A673 (cell line): ENCODE measurements at regions of chr6 and their contacts with region 1.

Region 1: DNA sequence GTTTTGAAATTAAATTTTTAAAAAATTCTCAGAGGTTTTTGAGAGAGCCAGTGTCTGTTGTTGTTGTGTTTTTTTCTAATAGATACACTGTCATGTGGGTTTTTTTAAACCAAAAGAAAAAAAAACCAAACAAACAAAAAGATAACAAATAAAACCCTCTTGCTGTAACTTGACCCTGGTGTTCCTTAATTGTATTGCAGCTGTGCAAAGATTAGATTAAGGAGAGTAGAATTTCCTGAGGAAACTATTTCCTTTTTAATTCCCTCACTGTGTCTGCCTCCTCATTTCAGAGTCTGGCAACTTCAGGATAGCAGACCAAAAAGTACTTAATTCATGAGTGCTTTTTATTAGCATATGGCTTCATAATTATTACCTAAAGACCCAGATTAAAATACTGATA is 281.9 kb downstream of the EPM2A start:
- DNase-seq: peak; percentile 92
- H3K4me3 ChIP-seq: no peak overlapping the region
- H3K27ac ChIP-seq: peak overlapping the region; percentile 86
- H3K4me1 ChIP-seq: peaks cover 23% of the 10 kb centered on the region
- H3K27me3 ChIP-seq: no peaks in the 10 kb centered on the region
- CTCF ChIP-seq: peak; percentile 52

Region 2: DNA sequence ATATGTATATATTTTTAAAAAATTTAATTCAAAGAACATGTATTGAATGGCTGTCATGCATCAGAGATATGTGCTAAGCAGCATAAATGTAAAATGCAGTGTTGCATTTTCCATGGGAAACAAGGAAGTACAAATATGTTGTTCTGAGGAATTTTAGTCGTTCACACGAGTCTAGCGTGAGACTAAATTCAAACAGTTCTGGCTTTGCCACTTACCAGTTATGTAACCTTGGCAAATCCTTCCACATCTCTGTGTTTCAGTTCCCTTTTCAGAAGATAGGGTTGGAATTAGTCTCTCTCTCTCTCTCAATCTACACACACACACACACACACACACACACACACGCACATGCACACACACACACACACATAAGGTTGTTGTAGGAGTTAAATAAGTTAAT is 862.8 kb before region 1 on chr6:
- CTCF ChIA-PET with region 1: no interaction called
- POLR2A ChIA-PET with region 1: no interaction called
- intact Hi-C with region 1: loop called (anchors 5 kb)
- DNase-seq: no peak
- H3K4me3 ChIP-seq: no peak overlapping the region
- H3K27ac ChIP-seq: no peak overlapping the region
- H3K4me1 ChIP-seq: peaks cover 48% of the 10 kb centered on the region
- H3K27me3 ChIP-seq: no peaks in the 10 kb centered on the region
- CTCF ChIP-seq: no peak

Region 3: GRCh38 chr6:145267076-145267867 is 186.1 kb before region 1 on chr6:
- CTCF ChIA-PET with region 1: no interaction called
- POLR2A ChIA-PET with region 1: no interaction called
- intact Hi-C with region 1: loop called (anchors 5 kb)
- DNase-seq: no peak
- H3K4me3 ChIP-seq: no peak overlapping the region
- H3K27ac ChIP-seq: no peak overlapping the region
- H3K4me1 ChIP-seq: peaks cover 18% of the 10 kb centered on the region
- H3K27me3 ChIP-seq: no peaks in the 10 kb centered on the region
- CTCF ChIP-seq: no peak

Region 4: GRCh38 chr6:145715426-145715825 is 262.1 kb after region 1 on chr6:
- CTCF ChIA-PET with region 1: no interaction called
- POLR2A ChIA-PET with region 1: no interaction called
- intact Hi-C with region 1: no loop called
- DNase-seq: no peak
- H3K4me3 ChIP-seq: no peak overlapping the region
- H3K27ac ChIP-seq: no peak overlapping the region
- H3K4me1 ChIP-seq: no peaks in the 10 kb centered on the region
- H3K27me3 ChIP-seq: no peaks in the 10 kb centered on the region
- CTCF ChIP-seq: no peak

Region 5: DNA sequence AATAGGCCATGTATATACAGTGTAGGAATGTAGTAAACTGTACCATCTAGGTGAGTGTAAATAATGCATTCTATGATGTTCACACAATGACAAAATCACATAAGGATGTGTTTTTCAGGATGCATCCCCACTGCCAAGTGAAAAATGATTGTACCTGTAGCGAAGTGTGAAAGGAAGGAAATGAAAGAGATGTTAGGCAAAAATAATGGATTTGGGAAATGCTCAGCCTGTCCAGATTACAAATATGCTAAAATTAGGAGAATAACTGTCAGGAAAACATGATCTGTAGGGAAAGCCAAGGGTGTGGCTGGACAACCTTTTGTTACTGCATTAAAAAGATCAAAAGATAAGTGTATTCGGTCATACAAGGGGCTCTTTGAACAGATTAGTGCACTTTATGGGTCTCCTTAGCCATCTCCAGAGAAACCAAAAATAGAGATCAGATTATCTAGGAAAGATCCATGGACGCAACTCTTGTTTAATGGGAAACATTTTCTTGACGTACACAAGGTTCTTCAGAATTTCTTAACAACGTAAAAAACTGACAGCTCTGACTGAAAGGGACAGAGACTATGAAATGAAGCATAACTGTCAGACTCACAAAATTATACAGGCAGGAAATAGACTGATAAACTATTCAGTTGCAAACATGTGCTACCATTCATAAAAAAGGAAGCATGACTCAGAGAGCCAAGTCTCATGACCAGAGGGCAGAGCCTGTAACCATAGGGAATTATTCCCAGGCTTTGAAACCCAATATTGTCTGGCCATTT is 836.6 kb after region 1 on chr6:
- CTCF ChIA-PET with region 1: no interaction called
- POLR2A ChIA-PET with region 1: no interaction called
- intact Hi-C with region 1: no loop called
- DNase-seq: peak; percentile 89
- H3K4me3 ChIP-seq: no peak overlapping the region
- H3K27ac ChIP-seq: no peak overlapping the region
- H3K4me1 ChIP-seq: peaks cover 9% of the 10 kb centered on the region
- H3K27me3 ChIP-seq: no peaks in the 10 kb centered on the region
- CTCF ChIP-seq: no peak

Region 6: GRCh38 chr6:146305092-146305491 is 851.7 kb after region 1 on chr6:
- CTCF ChIA-PET with region 1: no interaction called
- POLR2A ChIA-PET with region 1: no interaction called
- intact Hi-C with region 1: no loop called
- DNase-seq: no peak
- H3K4me3 ChIP-seq: no peak overlapping the region
- H3K27ac ChIP-seq: no peak overlapping the region
- H3K4me1 ChIP-seq: no peaks in the 10 kb centered on the region
- H3K27me3 ChIP-seq: no peaks in the 10 kb centered on the region
- CTCF ChIP-seq: no peak